Activated CD4-positive, alpha-beta T cell treated with anti-CD3 and anti-CD28 coated beads, Interleukin-2, amount 10 ng/mL, durations not matched to agents 7 days and 5 days (primary cell): ENCODE measurements at regions of chr14 and their contacts with region 1.

Region 1: GRCh38 chr14:35404449-35405303 is at the start of gene NFKBIA:
- DNase-seq: peak; percentile 90
- H3K4me3 Mint-ChIP-seq: peak within 1 kb of the TSS; percentile 88
- H3K27ac Mint-ChIP-seq: peak within 1 kb of the TSS; percentile 98
- H3K4me1 Mint-ChIP-seq: peaks cover 55% of the 10 kb centered on the region
- H3K27me3 Mint-ChIP-seq: no peaks in the 10 kb centered on the region
- total RNA-seq, gene NFKBIA: 60.1 to 61.7 TPM

Region 2: DNA sequence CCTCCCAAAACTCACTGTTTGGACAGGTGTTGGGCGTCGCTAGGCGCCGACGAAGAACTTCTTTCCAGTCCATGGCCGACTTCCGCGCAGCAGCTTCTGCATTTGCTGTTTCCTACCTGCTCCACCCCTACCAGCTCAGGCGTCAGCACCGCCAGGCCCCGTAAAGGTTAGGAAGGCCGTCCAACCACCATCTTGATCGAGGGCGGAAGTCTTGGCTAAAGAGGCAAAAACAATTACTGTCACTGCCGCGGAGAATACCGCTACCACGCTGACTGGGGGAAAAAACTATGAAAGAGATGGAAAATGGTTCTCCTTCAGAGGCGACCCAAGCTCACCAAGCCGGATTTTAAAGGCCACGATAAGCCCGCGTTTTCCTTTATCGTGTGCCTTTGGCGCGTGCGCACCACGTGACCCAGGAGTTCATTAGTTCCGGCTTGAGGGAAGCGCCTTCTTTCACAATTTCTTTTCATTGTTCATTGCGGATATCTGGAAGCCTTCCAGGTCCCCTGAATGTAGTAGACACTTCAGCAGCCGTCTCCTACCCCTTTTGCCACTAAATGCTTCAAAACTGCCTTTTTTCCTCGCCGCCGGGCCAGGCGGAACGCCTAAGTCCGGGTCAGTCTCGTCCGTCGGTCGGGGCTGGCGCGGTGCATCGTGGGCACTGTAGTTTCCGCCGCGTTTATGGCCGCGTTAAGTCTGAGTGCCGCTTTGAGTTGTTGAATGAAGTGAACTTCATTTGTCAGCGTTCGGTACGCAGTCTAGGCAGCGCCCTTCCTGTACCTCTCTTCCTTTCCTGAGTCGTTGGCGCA is 282.6 kb before region 1 on chr14 and contains the starts of genes PPP2R3C and PRORP:
- CTCF ChIA-PET with region 1: interaction called, 14 read pairs
- POLR2A ChIA-PET with region 1: interaction called, 4 read pairs
- DNase-seq: peak; percentile 95
- H3K4me3 Mint-ChIP-seq: peak within 1 kb of the TSS; percentile 96
- H3K27ac Mint-ChIP-seq: peak within 1 kb of the TSS; percentile 100
- H3K4me1 Mint-ChIP-seq: peaks cover 52% of the 10 kb centered on the region
- H3K27me3 Mint-ChIP-seq: no peaks in the 10 kb centered on the region
- total RNA-seq, gene PPP2R3C: 37.4 to 41.3 TPM
- total RNA-seq, gene PRORP: 40.2 to 46.0 TPM

Region 3: GRCh38 chr14:35292051-35292769 is 112.5 kb before region 1 on chr14 and contains the start of gene PSMA6:
- CTCF ChIA-PET with region 1: interaction called, 3 read pairs
- POLR2A ChIA-PET with region 1: interaction called, 21 read pairs
- DNase-seq: peak; percentile 100
- H3K4me3 Mint-ChIP-seq: peak within 1 kb of the TSS; percentile 98
- H3K27ac Mint-ChIP-seq: peak within 1 kb of the TSS; percentile 96
- H3K4me1 Mint-ChIP-seq: peaks cover 44% of the 10 kb centered on the region
- H3K27me3 Mint-ChIP-seq: no peaks in the 10 kb centered on the region
- total RNA-seq, gene PSMA6: 231 to 248 TPM

Region 4: GRCh38 chr14:35365130-35366055 is 39.3 kb before region 1 on chr14:
- CTCF ChIA-PET with region 1: interaction called, 11 read pairs
- POLR2A ChIA-PET with region 1: no interaction called
- DNase-seq: peak; percentile 31
- H3K4me3 Mint-ChIP-seq: no peak overlapping the region
- H3K27ac Mint-ChIP-seq: peak overlapping the region; percentile 38
- H3K4me1 Mint-ChIP-seq: peaks cover 30% of the 10 kb centered on the region
- H3K27me3 Mint-ChIP-seq: no peaks in the 10 kb centered on the region

Region 5: GRCh38 chr14:35416108-35416750 is 11.6 kb after region 1 on chr14:
- CTCF ChIA-PET with region 1: interaction called, 42 read pairs
- POLR2A ChIA-PET with region 1: interaction called, 11 read pairs
- DNase-seq: peak; percentile 59
- H3K4me3 Mint-ChIP-seq: peak overlapping the region; percentile 52
- H3K27ac Mint-ChIP-seq: peak overlapping the region; percentile 83
- H3K4me1 Mint-ChIP-seq: peaks cover 49% of the 10 kb centered on the region
- H3K27me3 Mint-ChIP-seq: no peaks in the 10 kb centered on the region